ENCODE measurements at regions of chr7 and their contacts with region 1.

Region 1: GRCh38 chr7:92833024-92833765 is 3.2 kb downstream of the CDK6 start:
- DNase-seq: peak; percentile 78 to 94 (median 86)
- ATAC-seq: peak; percentile 76
- H3K4me3 ChIP-seq: peak overlapping the region; percentile 92
- H3K4me3 Mint-ChIP-seq: peak overlapping the region; percentile 96
- H3K27ac ChIP-seq: peak overlapping the region; percentile 67 to 76
- H3K27ac Mint-ChIP-seq: peak overlapping the region; percentile 85
- H3K4me1 ChIP-seq: peaks cover 45% of the 10 kb centered on the region
- H3K4me1 Mint-ChIP-seq: peaks cover 62% of the 10 kb centered on the region
- H3K27me3 ChIP-seq: no peaks in the 10 kb centered on the region
- H3K27me3 Mint-ChIP-seq: peaks cover 8% of the 10 kb centered on the region
- CTCF ChIP-seq: peak; percentile 77

Region 2: DNA sequence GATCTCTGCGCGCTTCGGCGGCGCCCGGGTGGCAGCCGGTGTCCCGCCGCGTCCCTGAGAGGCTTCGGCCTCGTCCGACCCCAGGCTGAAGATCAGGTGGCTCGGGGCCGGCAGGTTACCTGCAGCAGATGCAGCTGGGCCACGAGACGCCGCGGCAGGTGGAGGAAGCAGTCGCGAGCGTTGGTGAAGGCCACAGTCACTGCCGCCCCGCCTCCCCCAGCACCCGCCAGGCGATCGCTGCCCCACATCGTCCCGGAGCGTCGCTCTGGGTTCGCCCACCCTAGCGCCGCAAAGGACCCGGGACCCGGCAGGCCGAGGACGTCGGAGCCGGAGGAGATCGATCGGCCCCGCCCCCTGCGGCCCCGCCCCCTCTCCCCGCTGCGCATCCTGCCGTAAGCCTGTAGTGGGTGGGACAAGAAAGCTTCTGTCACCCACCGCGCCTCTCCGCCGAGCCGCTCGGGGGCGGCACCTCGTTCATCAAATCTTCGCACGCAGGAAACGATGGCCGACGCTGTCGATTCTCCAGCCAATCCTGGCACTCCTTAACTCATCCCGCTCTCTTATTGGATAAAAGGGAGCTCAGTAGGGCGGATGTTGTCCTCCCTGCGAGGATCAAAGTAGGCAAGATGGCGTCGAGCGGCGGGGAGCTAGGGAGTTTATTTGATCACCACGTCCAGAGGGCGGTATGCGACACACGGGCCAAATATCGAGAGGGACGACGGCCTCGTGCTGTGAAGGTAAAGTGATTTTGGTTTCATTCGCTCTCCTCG is 304.8 kb before region 1 on chr7 and contains the starts of genes PEX1 and RBM48:
- CTCF ChIA-PET with region 1: interaction called, 9 read pairs
- POLR2A ChIA-PET with region 1: interaction called, 7 read pairs
- intact Hi-C with region 1: loop called in 1 of 2 experiments (anchors 5 kb)
- DNase-seq: peak; percentile 89 to 99 (median 94)
- ATAC-seq: peak; percentile 92
- H3K4me3 ChIP-seq: peak within 1 kb of the TSS; percentile 94
- H3K4me3 Mint-ChIP-seq: peak within 1 kb of the TSS; percentile 96
- H3K27ac ChIP-seq: peak within 1 kb of the TSS; percentile 86 to 97
- H3K27ac Mint-ChIP-seq: peak within 1 kb of the TSS; percentile 94
- H3K4me1 ChIP-seq: peaks cover 19% of the 10 kb centered on the region
- H3K4me1 Mint-ChIP-seq: peaks cover 52% of the 10 kb centered on the region
- H3K27me3 ChIP-seq: no peaks in the 10 kb centered on the region
- H3K27me3 Mint-ChIP-seq: no peaks in the 10 kb centered on the region
- CTCF ChIP-seq: peak; percentile 42
- total RNA-seq, gene PEX1: 19.7 to 20.7 TPM
- total RNA-seq, gene RBM48: 45.4 to 47.3 TPM

Region 3: GRCh38 chr7:92633211-92633906 is 199.8 kb before region 1 on chr7:
- CTCF ChIA-PET with region 1: interaction called, 15 read pairs
- POLR2A ChIA-PET with region 1: no interaction called
- intact Hi-C with region 1: no loop called
- DNase-seq: peak in 5 of 14 experiments; percentile 7 to 72 (median 66)
- ATAC-seq: peak; percentile 56
- H3K4me3 ChIP-seq: no peak overlapping the region
- H3K4me3 Mint-ChIP-seq: no peak overlapping the region
- H3K27ac ChIP-seq: no peak overlapping the region
- H3K27ac Mint-ChIP-seq: no peak overlapping the region
- H3K4me1 ChIP-seq: no peaks in the 10 kb centered on the region
- H3K4me1 Mint-ChIP-seq: peaks cover 37% of the 10 kb centered on the region
- H3K27me3 ChIP-seq: no peaks in the 10 kb centered on the region
- H3K27me3 Mint-ChIP-seq: no peaks in the 10 kb centered on the region
- CTCF ChIP-seq: no peak

Region 4: DNA sequence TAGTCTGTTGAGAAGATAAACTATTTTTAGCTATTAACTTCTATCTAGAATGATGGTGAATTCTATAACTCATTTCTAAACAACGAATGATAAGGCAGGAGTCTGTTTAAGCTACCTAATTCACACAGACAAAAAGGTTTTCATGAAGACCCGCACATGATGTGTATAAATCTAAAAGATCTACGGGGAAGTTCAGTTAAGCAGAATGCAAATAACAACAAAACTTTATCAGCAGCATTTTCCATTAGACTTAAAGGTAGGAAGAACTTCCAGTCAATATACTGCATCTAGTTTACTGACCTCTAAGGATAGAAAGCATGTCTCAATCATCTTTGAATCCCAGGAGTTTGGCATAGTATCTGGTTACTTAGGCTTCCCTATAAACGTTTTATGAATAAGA is 59.4 kb before region 1 on chr7:
- CTCF ChIA-PET with region 1: interaction called, 10 read pairs
- POLR2A ChIA-PET with region 1: no interaction called
- intact Hi-C with region 1: no loop called
- DNase-seq: no peak
- ATAC-seq: no peak
- H3K4me3 ChIP-seq: no peak overlapping the region
- H3K4me3 Mint-ChIP-seq: no peak overlapping the region
- H3K27ac ChIP-seq: no peak overlapping the region
- H3K27ac Mint-ChIP-seq: no peak overlapping the region
- H3K4me1 ChIP-seq: no peaks in the 10 kb centered on the region
- H3K4me1 Mint-ChIP-seq: no peaks in the 10 kb centered on the region
- H3K27me3 ChIP-seq: no peaks in the 10 kb centered on the region
- H3K27me3 Mint-ChIP-seq: no peaks in the 10 kb centered on the region
- CTCF ChIP-seq: no peak

Region 5: GRCh38 chr7:92815412-92815811 is 17.8 kb before region 1 on chr7:
- CTCF ChIA-PET with region 1: interaction called, 22 read pairs
- POLR2A ChIA-PET with region 1: interaction called, 8 read pairs
- intact Hi-C with region 1: loop called (anchors 2 kb)
- DNase-seq: peak in 1 of 14 experiments; percentile 33
- ATAC-seq: no peak
- H3K4me3 ChIP-seq: no peak overlapping the region
- H3K4me3 Mint-ChIP-seq: no peak overlapping the region
- H3K27ac ChIP-seq: no peak overlapping the region
- H3K27ac Mint-ChIP-seq: no peak overlapping the region
- H3K4me1 ChIP-seq: no peaks in the 10 kb centered on the region
- H3K4me1 Mint-ChIP-seq: peaks cover 48% of the 10 kb centered on the region
- H3K27me3 ChIP-seq: no peaks in the 10 kb centered on the region
- H3K27me3 Mint-ChIP-seq: no peaks in the 10 kb centered on the region
- CTCF ChIP-seq: no peak

Region 6: DNA sequence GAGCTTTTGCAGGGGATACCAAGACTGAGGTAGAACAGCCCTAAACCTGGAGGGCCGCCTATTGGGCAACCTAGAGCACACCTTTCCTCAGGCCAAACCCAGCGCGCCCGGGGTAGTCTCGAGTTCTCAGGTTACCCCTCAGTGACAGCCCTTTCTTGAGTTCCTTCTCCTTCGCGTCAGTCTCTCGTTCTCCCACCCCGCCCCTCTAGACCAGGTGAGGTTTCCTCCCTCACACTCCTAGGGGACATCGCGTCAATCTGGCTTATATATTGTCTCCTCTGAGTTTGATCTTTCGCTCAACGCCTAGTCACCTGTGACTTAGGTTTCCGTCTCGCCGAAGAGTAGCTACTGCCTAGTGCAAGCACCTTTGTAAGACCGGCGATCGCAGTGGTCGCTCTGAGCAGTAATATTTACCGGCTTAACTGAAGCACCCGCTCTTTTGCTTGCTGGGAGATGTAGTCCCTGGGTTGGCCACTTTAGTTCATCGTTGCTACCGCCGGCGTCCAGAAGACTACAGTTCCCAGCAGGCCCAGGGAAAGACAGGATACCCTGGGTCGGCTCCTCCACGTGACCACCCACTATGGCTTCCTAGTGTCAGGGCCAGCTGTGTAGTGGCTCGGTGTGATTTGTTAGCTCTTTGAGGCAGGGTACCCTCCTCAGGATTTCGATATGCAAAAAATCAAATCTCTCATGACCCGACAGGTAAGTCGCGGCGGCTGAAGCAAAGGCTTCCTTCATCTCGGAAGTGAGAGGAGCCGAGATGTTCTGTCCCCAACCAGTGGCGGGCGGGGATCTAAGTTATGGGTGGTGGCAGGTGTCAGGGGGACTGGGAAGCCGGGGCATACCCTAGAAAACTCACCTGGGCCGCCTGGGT is 398.8 kb after region 1 on chr7 and contains the start of gene VPS50:
- CTCF ChIA-PET with region 1: no interaction called
- POLR2A ChIA-PET with region 1: interaction called, 4 read pairs
- intact Hi-C with region 1: loop called (anchors 5 to 10 kb)
- DNase-seq: peak; percentile 84 to 97 (median 88)
- ATAC-seq: peak; percentile 94
- H3K4me3 ChIP-seq: peak within 1 kb of the TSS; percentile 67
- H3K4me3 Mint-ChIP-seq: peak within 1 kb of the TSS; percentile 96
- H3K27ac ChIP-seq: peak within 1 kb of the TSS; percentile 79 to 91
- H3K27ac Mint-ChIP-seq: peak within 1 kb of the TSS; percentile 95
- H3K4me1 ChIP-seq: peaks cover 6% of the 10 kb centered on the region
- H3K4me1 Mint-ChIP-seq: peaks cover 25% of the 10 kb centered on the region
- H3K27me3 ChIP-seq: no peaks in the 10 kb centered on the region
- H3K27me3 Mint-ChIP-seq: no peaks in the 10 kb centered on the region
- CTCF ChIP-seq: no peak
- total RNA-seq, gene VPS50: 13.2 to 17.3 TPM

Measured in CD4-positive, alpha-beta T cell (primary cell).